ENCODE measurements at regions of chrX and their contacts with region 1.

Region 1: GRCh38 chrX:109856974-109857373 is 123.9 kb upstream of the ACSL4 start:
- DNase-seq: peak; percentile 7 to 18
- ATAC-seq: no peak
- H3K4me3 ChIP-seq: no peak overlapping the region
- H3K27ac ChIP-seq: peak overlapping the region; percentile 41 to 51; a peak in 4 of 6 replicates
- H3K4me1 ChIP-seq: peaks cover 5% of the 10 kb centered on the region; the same call in 2 of the 3 replicates
- CTCF ChIP-seq: peak; percentile 83
- EP300 ChIP-seq: no peak
- POLR2A ChIP-seq: no peak
- RAD21 ChIP-seq: peak; percentile 79 to 88

Region 2: GRCh38 chrX:109720947-109721346 is 136.0 kb before region 1 on chrX:
- CTCF ChIA-PET with region 1: interaction called, 147 read pairs
- POLR2A ChIA-PET with region 1: no interaction called
- DNase-seq: no peak
- ATAC-seq: no peak
- H3K4me3 ChIP-seq: no peak overlapping the region
- H3K27ac ChIP-seq: no peak overlapping the region
- H3K4me1 ChIP-seq: peaks cover 9% of the 10 kb centered on the region; the same call in 2 of the 3 replicates
- CTCF ChIP-seq: no peak
- EP300 ChIP-seq: no peak
- POLR2A ChIP-seq: no peak
- RAD21 ChIP-seq: no peak

Region 3: GRCh38 chrX:109840585-109840984 is 16.4 kb before region 1 on chrX:
- CTCF ChIA-PET with region 1: interaction called, 21 read pairs
- POLR2A ChIA-PET with region 1: no interaction called
- DNase-seq: peak; percentile 31 to 69
- ATAC-seq: peak; percentile 91
- H3K4me3 ChIP-seq: no peak overlapping the region
- H3K27ac ChIP-seq: peak overlapping the region; percentile 71 to 90
- H3K4me1 ChIP-seq: peaks cover 36% of the 10 kb centered on the region
- CTCF ChIP-seq: no peak
- EP300 ChIP-seq: peak in 1 of 2 experiments; percentile 53; a peak in 2 of 5 replicates
- POLR2A ChIP-seq: no peak
- RAD21 ChIP-seq: peak in 1 of 2 experiments; percentile 32; a peak in 2 of 5 replicates

Region 4: GRCh38 chrX:109872021-109872732 is 15.2 kb after region 1 on chrX:
- CTCF ChIA-PET with region 1: interaction called, 10 read pairs
- POLR2A ChIA-PET with region 1: no interaction called
- DNase-seq: no peak
- ATAC-seq: no peak
- H3K4me3 ChIP-seq: no peak overlapping the region
- H3K27ac ChIP-seq: no peak overlapping the region
- H3K4me1 ChIP-seq: no peaks in the 10 kb centered on the region
- CTCF ChIP-seq: no peak
- EP300 ChIP-seq: no peak
- POLR2A ChIP-seq: no peak
- RAD21 ChIP-seq: no peak

Region 5: GRCh38 chrX:109997786-109998452 is 140.9 kb after region 1 on chrX:
- CTCF ChIA-PET with region 1: no interaction called
- POLR2A ChIA-PET with region 1: no interaction called
- DNase-seq: no peak
- ATAC-seq: no peak
- H3K4me3 ChIP-seq: no peak overlapping the region
- H3K27ac ChIP-seq: no peak overlapping the region
- H3K4me1 ChIP-seq: peaks cover 8% of the 10 kb centered on the region
- CTCF ChIP-seq: no peak
- EP300 ChIP-seq: no peak
- POLR2A ChIP-seq: no peak
- RAD21 ChIP-seq: no peak

Region 6: GRCh38 chrX:110046001-110046400 is 189.0 kb after region 1 on chrX:
- CTCF ChIA-PET with region 1: no interaction called
- POLR2A ChIA-PET with region 1: no interaction called
- DNase-seq: peak in 1 of 2 experiments; percentile 18
- ATAC-seq: peak; percentile 50 to 69; a peak in 3 of 6 replicates
- H3K4me3 ChIP-seq: no peak overlapping the region
- H3K27ac ChIP-seq: peak overlapping the region; percentile 35 to 58; a peak in 4 of 6 replicates
- H3K4me1 ChIP-seq: peaks cover 76% of the 10 kb centered on the region
- CTCF ChIP-seq: 0 out of 3 replicates have a peak, but pooled peaks have one; percentile 19
- EP300 ChIP-seq: no peak
- POLR2A ChIP-seq: no peak
- RAD21 ChIP-seq: peak in 1 of 2 experiments; percentile 38; a peak in 4 of 5 replicates